MCF 10A (cell line): ENCODE measurements at regions of chr7 and their contacts with region 1.

Region 1: GRCh38 chr7:94223375-94224070 is 171.2 kb upstream of the COL1A2 start:
- DNase-seq: peak; percentile 27
- H3K4me3 Mint-ChIP-seq: no peak overlapping the region
- H3K27ac Mint-ChIP-seq: no peak overlapping the region
- H3K4me1 Mint-ChIP-seq: peaks cover 7% of the 10 kb centered on the region
- H3K27me3 Mint-ChIP-seq: no peaks in the 10 kb centered on the region
- CTCF ChIP-seq: peak; percentile 22

Region 2: DNA sequence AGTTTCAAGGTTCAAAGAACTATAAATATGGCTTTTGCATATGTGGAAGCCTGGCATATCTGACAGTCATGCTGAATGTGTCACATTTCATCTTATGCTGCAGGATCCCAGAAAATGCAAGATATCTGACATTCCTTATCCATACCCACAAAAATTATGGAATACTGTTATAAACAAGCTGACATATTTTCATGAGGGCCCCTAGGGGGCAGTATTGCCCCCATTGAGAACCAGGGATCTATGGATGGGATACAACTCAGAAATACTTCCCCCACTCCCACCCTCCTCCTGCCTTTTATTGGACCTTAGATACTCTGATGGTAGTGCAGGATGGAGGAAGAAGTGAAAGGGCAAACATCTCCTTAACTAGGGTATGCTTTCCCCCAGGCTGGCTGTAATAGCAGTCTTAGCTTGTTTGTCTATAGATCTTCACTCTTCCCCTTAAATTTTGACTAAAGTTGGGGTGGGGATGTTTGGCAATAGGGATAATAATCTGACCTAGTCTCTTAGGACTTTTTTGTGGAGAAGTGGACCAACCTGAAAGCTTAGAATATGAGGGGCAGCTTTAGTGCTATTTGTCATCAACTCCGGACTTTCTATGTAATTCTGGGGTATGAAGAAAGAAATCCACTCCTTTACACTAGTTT is 320.6 kb before region 1 on chr7:
- CTCF ChIA-PET with region 1: no interaction called
- POLR2A ChIA-PET with region 1: no interaction called
- intact Hi-C with region 1: loop called (anchors 2 kb)
- DNase-seq: peak; percentile 68
- H3K4me3 Mint-ChIP-seq: no peak overlapping the region
- H3K27ac Mint-ChIP-seq: no peak overlapping the region
- H3K4me1 Mint-ChIP-seq: no peaks in the 10 kb centered on the region
- H3K27me3 Mint-ChIP-seq: no peaks in the 10 kb centered on the region
- CTCF ChIP-seq: peak; percentile 80

Region 3: DNA sequence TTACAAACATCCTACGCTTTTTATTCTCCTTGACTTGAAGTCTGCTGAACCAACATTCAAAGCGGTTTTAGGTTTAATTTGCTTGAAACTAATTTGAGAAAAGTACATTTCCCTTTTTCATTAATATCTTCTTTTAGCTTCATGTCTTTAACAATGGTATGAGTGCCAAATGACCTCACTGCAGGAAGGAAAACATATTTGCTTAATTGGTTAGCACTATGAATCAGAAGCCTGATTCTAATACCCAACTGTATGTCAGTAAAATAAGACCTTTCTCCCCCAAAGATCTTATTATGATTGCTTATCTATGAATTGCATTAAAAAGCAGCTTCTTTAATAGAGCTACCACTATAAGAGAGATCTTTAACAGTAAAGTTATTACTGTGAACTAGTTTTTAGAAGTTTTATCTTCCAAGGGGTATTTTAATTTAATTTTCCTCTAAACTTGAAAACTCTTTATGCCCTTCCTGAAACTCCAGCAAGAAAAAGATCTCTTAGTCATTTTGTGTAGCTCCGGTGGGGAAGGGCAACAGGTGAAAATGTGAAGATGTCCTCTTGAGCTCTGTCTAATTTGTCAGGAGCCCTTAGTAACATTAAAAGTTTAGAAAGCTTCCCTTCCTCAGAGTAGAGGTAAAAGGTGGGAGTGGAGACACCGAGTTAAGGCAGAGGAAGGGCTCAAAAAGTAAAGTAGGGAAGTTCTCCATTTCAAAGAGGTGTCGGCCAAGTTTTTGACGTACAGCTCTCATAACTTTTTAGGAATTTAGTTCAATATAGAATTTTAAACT is 177.3 kb after region 1 on chr7:
- CTCF ChIA-PET with region 1: no interaction called
- POLR2A ChIA-PET with region 1: no interaction called
- intact Hi-C with region 1: no loop called
- DNase-seq: no peak
- H3K4me3 Mint-ChIP-seq: no peak overlapping the region
- H3K27ac Mint-ChIP-seq: no peak overlapping the region
- H3K4me1 Mint-ChIP-seq: no peaks in the 10 kb centered on the region
- H3K27me3 Mint-ChIP-seq: no peaks in the 10 kb centered on the region
- CTCF ChIP-seq: no peak